ENCODE measurements at regions of chr7 and their contacts with region 1.

Region 1: DNA sequence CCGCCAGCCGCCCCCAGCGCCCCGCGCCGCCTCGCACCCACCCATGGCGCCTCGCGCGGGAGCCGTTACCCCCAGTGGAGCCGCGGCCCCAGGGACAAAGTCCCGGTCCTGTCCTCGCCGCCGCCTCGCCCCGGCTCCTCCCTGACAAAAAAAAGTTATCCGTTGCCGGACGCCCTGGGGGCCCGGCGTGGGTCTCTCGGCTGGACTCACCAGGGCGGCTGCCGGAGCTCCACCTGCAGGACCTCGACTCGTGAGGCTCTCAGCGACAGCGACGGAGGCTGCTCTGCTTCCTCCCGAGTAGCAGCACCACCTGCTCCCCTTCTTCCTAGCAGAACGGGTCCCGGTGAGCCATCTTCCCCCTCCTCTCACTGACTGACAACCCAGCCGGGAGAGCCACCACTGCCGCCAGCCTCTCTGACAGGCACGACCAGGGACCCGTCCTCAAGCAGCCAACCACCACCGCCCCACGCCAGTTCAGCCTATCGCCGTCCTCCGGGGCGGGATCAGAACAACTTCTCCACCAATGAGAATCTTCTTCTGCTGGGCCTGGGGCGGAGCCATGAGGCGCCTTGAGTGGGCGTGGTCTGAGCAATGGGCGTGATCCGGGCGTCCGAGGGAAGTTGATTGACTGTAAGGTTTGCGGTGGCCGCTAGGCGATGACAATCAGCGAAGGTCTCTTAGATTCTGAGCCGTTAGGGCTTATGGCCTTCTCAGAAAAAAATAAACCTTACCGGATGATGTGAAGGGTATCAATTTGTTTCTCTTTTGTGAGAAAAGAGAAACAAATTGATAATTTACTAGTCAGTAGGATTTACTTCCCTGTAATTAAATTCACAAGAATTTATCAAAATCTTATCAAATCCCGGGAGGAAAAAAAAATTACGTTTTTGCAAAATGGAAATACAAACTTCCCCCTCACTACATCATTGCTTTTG is at the start of gene HYCC1:
- DNase-seq: peak; percentile 99
- H3K4me3 ChIP-seq: peak within 1 kb of the TSS; percentile 66 to 94 (median 71)
- H3K27ac ChIP-seq: peak within 1 kb of the TSS; percentile 20
- H3K4me1 ChIP-seq: peaks cover 47% of the 10 kb centered on the region
- H3K27me3 ChIP-seq: no peaks in the 10 kb centered on the region
- CTCF ChIP-seq: peak; percentile 59 to 72
- POLR2A ChIP-seq: peak; percentile 96
- total RNA-seq, gene HYCC1: 43.2 and 51.8 TPM in 2 replicates

Region 2: GRCh38 chr7:22565315-22565811 is 448.6 kb before region 1 on chr7:
- CTCF ChIA-PET with region 1: interaction called, 9 read pairs
- POLR2A ChIA-PET with region 1: no interaction called
- dilution Hi-C with region 1: no loop called
- intact Hi-C with region 1: loop called (anchors 2 kb)
- DNase-seq: peak; percentile 69
- H3K4me3 ChIP-seq: peak overlapping the region in 1 of 3 experiments; percentile 70
- H3K27ac ChIP-seq: peak overlapping the region; percentile 99
- H3K4me1 ChIP-seq: peaks cover 72% of the 10 kb centered on the region
- H3K27me3 ChIP-seq: no peaks in the 10 kb centered on the region
- CTCF ChIP-seq: no peak
- POLR2A ChIP-seq: peak; percentile 41

Region 3: DNA sequence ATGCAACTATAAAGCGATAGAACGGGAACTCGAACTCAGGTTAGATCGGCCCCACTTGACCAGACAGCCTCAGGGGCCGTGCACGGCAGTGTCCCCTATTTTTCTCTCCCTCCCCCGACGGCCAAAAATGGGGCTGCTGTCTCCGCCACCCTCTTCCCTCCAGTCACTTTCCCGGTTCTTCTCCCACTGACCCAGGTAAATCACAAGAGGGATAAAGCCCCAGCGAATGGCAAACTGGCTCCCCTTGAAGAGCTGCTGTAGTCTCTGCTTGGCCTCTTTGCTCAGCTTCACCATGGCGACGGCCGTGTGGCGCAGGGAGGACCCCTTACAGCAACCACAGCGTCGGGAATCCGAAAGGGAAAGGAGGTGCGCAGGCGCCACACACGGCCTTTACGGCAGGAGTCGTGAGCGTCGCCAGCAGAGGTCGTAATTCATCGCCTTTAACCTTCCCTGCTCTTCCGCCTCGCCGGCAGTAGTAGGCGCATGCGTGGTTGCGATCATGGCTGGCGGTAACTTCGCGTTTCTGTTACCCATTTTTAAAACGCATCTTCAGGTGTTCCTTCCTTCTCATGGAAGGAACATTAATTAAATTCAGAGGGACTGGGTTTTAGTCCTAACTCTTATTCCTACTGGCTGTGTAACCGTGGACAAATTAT is 191.4 kb before region 1 on chr7 and contains the start of gene TOMM7:
- CTCF ChIA-PET with region 1: no interaction called
- POLR2A ChIA-PET with region 1: interaction called, 3 read pairs
- dilution Hi-C with region 1: no loop called
- intact Hi-C with region 1: loop called (anchors 2 kb)
- DNase-seq: peak; percentile 99
- H3K4me3 ChIP-seq: peak within 1 kb of the TSS; percentile 50 to 93 (median 75)
- H3K27ac ChIP-seq: peak within 1 kb of the TSS; percentile 60
- H3K4me1 ChIP-seq: peaks cover 5% of the 10 kb centered on the region
- H3K27me3 ChIP-seq: peaks cover 2 to 11% of the 10 kb centered on the region in 2 experiments
- CTCF ChIP-seq: no peak
- POLR2A ChIP-seq: peak; percentile 95
- total RNA-seq, gene TOMM7: 185 and 200 TPM in 2 replicates

Region 4: DNA sequence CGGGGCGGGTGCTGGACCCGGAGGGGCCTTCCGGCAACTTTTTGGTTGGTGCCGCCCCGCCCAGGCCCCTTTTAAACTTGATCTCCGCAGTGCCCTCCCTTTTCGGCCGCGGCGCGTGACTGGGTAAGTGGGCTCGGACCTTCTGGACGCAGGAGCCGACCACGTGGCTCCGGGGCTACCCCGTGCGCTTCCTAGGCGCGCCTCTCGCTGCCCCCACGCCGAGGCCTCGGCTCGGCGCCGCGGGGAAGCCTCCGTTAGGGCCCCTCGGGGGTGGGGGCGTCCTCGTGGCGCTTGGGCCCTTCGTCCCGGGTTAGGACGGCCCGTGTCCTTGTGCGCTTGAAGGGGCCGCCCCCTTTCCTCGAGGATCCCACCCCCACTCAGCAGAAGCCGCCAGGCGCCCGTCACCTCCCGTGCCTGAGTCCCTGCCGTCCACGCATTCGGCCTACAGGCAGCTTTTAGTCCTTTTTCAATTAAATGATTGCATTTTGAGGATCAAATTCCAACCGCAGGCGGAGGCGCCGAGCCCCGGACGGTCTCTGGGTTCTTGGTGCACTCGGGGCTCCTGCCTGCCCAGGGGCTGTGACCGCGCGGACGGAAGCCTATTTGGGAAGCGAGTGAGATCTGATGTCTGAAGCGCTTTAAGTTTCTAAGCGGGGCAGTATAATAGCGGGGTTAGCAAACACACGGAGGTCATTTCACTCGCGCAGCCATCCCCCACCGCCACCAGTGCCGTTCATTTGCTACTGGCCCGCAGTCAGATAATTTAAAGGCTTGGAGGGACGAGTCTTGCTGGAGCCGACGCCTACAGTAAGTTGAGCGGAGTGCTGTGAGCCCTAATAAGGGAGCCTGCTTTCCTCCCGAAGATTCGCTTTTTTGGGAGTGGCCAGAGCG is 159.6 kb before region 1 on chr7:
- CTCF ChIA-PET with region 1: no interaction called
- POLR2A ChIA-PET with region 1: no interaction called
- dilution Hi-C with region 1: no loop called
- intact Hi-C with region 1: loop called (anchors 1 kb)
- DNase-seq: peak; percentile 72
- H3K4me3 ChIP-seq: peak overlapping the region; percentile 76 to 88 (median 86)
- H3K27ac ChIP-seq: peak overlapping the region; percentile 74
- H3K4me1 ChIP-seq: peaks cover 36% of the 10 kb centered on the region
- H3K27me3 ChIP-seq: no peaks in the 10 kb centered on the region
- CTCF ChIP-seq: peak; percentile 41 to 58
- POLR2A ChIP-seq: peak; percentile 84

Region 5: DNA sequence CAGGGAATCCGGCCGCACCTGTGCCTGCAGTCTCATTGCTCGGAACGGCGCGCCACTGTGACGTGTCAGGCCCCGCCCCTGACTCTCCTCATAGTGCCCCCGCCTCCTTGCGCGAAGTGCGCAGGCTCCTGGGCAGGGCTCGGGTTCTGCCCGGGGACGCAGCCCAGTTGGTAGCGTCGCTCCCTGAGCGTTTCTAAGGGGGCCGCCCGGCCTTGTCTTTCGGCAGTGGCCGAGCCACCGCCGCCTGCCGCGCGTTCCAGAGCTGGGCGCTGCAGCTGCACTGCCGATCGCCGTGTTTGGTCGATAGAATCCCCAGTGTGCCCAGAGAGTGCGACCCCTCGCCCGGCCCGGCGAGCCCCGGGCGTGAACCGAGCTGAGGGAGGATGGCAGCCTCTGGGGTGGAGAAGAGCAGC is 91.7 kb after region 1 on chr7 and contains the start of gene KLHL7:
- CTCF ChIA-PET with region 1: no interaction called
- POLR2A ChIA-PET with region 1: no interaction called
- dilution Hi-C with region 1: no loop called
- intact Hi-C with region 1: loop called (anchors 5 kb)
- DNase-seq: peak; percentile 95
- H3K4me3 ChIP-seq: peak within 1 kb of the TSS; percentile 89 to 99 (median 96)
- H3K27ac ChIP-seq: peak within 1 kb of the TSS; percentile 78
- H3K4me1 ChIP-seq: peaks cover 17% of the 10 kb centered on the region
- H3K27me3 ChIP-seq: no peaks in the 10 kb centered on the region
- CTCF ChIP-seq: no peak
- POLR2A ChIP-seq: peak; percentile 93
- total RNA-seq, gene KLHL7: 29.0 and 32.1 TPM in 2 replicates